ENCODE measurements at regions of chr1 and their contacts with region 1.

Region 1: DNA sequence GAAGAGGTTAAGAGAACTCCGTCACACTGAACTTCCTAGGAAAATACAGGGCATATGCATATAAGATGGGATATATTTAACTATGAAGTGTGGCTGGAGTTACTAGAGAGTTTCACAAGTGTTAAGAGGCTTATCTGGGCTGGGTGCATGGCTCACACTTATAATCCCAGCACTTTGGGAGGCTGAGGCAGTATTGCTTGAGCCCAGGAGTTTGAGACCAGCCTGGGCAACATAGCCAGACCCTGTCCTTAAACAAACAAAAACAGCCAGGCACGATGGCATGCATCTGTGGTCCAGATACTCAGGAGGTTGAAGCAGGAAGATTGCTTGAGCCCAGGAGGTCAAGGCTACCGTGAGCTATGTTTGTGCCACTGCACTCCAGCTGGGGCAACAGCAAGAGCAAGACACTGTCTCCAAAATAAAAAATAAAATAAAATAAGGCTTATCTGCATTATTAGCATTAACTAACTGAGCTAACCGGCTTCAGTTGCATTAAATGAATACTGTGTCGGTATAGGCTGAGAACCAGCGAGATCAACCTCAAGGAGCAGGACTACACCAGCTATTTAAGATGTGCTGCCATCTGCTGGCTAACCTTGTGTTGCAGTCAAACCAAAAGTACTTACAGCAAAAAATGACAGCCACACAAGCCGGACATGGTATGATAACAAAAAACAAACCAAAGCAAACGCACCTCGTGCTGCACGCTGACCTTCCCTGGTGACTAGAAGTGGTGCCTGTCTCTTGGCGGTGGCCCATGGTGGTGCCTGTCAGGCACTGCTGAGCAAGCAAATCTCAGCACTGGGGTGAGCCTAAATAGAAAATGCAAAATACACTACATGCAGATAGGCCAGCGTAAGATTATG is 19.7 kb upstream of the RBBP5 start:
- DNase-seq: peak; percentile 75
- CTCF ChIP-seq: peak; percentile 68

Region 2: GRCh38 chr1:204950353-204951001 is 191.0 kb before region 1 on chr1:
- CTCF ChIA-PET with region 1: no interaction called
- POLR2A ChIA-PET with region 1: no interaction called
- DNase-seq: no peak
- CTCF ChIP-seq: no peak

Region 3: GRCh38 chr1:204989266-204990058 is 152.0 kb before region 1 on chr1:
- CTCF ChIA-PET with region 1: interaction called, 34 read pairs
- POLR2A ChIA-PET with region 1: interaction called, 3 read pairs
- DNase-seq: peak; percentile 87
- CTCF ChIP-seq: peak; percentile 92

Region 4: DNA sequence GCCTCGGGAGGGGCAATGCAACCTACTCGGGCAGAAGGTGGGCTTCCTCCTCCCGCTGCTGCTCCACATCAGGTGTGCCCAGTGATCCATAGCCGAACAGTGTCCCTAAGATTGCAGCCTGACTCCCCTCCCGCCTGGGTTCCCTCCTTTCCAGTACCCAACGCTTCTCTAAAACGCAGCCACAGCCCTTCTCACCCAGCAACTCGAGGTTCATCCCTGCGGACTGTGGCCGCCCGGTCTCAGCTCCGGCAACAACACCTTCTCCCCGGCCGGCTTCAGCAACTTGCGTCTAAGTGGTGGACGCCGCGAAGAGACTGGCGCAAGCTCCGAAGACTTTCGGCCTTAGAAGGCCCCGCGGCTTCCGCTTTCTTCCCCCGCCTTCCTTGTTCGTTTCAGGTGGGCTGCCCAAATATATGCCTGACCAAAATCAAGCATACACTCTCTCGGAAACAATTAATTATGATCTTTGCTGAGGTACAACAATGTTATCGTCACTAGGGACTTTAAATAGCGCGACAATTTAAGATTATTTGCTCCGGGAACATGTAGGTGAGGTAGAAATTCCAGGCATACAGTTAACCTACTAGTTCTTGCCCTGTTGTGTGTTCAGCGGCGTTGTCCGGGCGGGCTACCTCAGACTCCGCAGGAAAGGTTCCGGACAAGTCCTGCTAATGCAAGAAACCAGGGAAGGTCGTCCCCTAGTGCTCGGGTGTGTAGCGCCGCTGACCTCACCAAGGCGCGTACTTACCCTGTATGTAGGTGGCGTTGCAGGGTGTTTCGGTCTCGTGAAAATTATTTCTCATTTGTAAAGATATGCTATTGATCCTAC is 19.6 kb before region 1 on chr1 and contains the start of gene RBBP5:
- CTCF ChIA-PET with region 1: interaction called, 33 read pairs
- POLR2A ChIA-PET with region 1: no interaction called
- DNase-seq: peak; percentile 89
- CTCF ChIP-seq: peak; percentile 83

Region 5: DNA sequence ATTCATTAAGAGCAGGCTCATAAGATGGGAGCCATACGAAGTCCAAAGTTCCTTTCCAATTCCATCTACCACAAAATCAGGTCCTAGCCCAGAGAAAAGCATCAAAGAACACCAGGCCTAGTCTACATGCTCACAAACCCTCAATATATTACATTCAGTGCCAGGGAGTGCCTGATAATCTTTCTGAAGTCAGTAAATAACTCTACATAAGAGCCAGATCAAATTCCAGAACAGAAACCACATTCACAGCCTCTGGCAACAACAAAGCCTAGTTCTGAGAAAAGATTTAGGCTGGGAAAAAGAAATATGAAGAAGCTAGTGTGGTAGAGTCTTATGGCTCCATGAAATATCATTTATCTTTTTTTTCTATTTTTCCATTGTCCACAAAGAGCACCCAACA is 20.8 kb after region 1 on chr1:
- CTCF ChIA-PET with region 1: interaction called, 46 read pairs
- POLR2A ChIA-PET with region 1: no interaction called
- DNase-seq: no peak
- CTCF ChIP-seq: no peak

Region 6: GRCh38 chr1:205190845-205191577 is 49.5 kb after region 1 on chr1:
- CTCF ChIA-PET with region 1: interaction called, 11 read pairs
- POLR2A ChIA-PET with region 1: no interaction called
- DNase-seq: no peak
- CTCF ChIP-seq: no peak

Measured in GM10248 (cell line).